Naive thymus-derived CD4-positive, alpha-beta T cell (primary cell): ENCODE measurements at regions of chr12 and their contacts with region 1.

Region 1: GRCh38 chr12:91811481-91812287 is 334.0 kb downstream of the BTG1 start:
- DNase-seq: peak; percentile 64 to 79 (median 70)
- ATAC-seq: peak; percentile 90
- H3K4me3 ChIP-seq: peak overlapping the region; percentile 37
- H3K4me3 Mint-ChIP-seq: peak overlapping the region in 9 of 10 donors; percentile 31 to 80 (median 52)
- H3K27ac ChIP-seq: peak overlapping the region; percentile 22
- H3K27ac Mint-ChIP-seq: peak overlapping the region in 8 of 9 donors; percentile 81 to 97 (median 86)
- H3K4me1 ChIP-seq: peaks cover 0 to 15% of the 10 kb centered on the region in 2 donors
- H3K4me1 Mint-ChIP-seq: peaks cover 10 to 48% (median 35%) of the 10 kb centered on the region in 7 donors
- H3K27me3 ChIP-seq: no peaks in the 10 kb centered on the region
- H3K27me3 Mint-ChIP-seq: no peaks in the 10 kb centered on the region

Region 2: DNA sequence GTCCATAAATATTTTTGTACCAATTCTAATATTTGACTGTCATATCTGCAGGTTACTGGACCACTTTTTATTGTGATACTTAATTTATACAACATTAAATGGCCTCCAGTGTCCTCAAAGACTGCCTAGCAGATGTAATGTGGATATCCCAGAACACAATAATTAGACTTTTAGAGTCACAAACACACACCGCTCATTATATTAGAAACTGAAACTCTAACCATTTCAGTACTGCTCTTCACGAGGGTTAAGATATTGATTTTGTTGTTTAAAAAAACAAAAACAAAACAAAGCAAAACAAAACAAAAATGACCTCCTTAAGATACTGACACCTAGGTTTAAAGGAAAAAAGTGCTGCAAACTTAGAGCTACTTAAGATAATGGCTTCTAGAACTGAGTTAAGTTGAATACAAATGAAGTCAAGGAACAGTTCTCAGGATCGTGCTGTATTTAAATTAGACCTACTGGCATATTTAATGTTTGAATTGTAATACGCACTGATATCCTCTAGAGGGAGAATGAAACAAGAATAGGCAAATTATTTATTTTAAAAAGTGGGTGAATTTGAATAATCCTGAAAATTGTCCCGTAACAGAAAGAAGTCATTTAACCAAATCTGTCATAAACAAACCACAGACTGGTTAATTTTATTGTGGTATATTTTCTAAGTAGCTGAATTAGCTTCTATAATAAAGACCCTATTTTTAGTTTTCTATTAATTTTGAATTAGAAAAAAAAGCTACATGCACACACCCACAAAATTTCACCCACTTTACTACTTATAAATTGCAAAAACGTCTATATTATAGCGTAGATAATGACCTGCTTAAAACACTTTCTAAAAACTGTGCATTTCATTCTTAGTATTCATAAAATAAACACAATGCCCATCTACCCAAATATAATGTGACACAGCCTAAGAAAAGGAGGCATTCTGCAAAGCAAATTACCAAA is 233.8 kb before region 1 on chr12:
- CTCF ChIA-PET with region 1: interaction called, 6 read pairs
- POLR2A ChIA-PET with region 1: no interaction called
- intact Hi-C with region 1: loop called in 1 of 2 experiments (anchors 2 kb)
- DNase-seq: peak in 6 of 9 donors; percentile 30 to 53 (median 39)
- ATAC-seq: peak; percentile 88
- H3K4me3 ChIP-seq: peak overlapping the region; percentile 39
- H3K4me3 Mint-ChIP-seq: peak overlapping the region; percentile 16 to 93 (median 84)
- H3K27ac ChIP-seq: no peak overlapping the region
- H3K27ac Mint-ChIP-seq: peak overlapping the region; percentile 14 to 94 (median 81)
- H3K4me1 ChIP-seq: peaks cover 0 to 5% of the 10 kb centered on the region in 2 donors
- H3K4me1 Mint-ChIP-seq: peaks cover 12 to 36% (median 19%) of the 10 kb centered on the region in 7 donors
- H3K27me3 ChIP-seq: no peaks in the 10 kb centered on the region
- H3K27me3 Mint-ChIP-seq: peaks cover 0 to 3% (median 0%) of the 10 kb centered on the region in 5 donors

Region 3: GRCh38 chr12:91778938-91779400 is 32.7 kb before region 1 on chr12:
- CTCF ChIA-PET with region 1: interaction called, 20 read pairs
- POLR2A ChIA-PET with region 1: interaction called, 10 read pairs
- intact Hi-C with region 1: loop called in 1 of 2 experiments (anchors 1 kb)
- DNase-seq: peak in 8 of 9 donors; percentile 14 to 47 (median 27)
- ATAC-seq: peak; percentile 75
- H3K4me3 ChIP-seq: peak overlapping the region; percentile 29
- H3K4me3 Mint-ChIP-seq: peak overlapping the region; percentile 72 to 92 (median 83)
- H3K27ac ChIP-seq: peak overlapping the region; percentile 67
- H3K27ac Mint-ChIP-seq: peak overlapping the region; percentile 91 to 97 (median 93)
- H3K4me1 ChIP-seq: peaks cover 10 to 35% of the 10 kb centered on the region in 2 donors
- H3K4me1 Mint-ChIP-seq: peaks cover 19 to 70% (median 50%) of the 10 kb centered on the region in 7 donors
- H3K27me3 ChIP-seq: no peaks in the 10 kb centered on the region
- H3K27me3 Mint-ChIP-seq: peaks cover 0 to 4% (median 3%) of the 10 kb centered on the region in 5 donors

Region 4: GRCh38 chr12:91785655-91786498 is 25.8 kb before region 1 on chr12:
- CTCF ChIA-PET with region 1: interaction called, 20 read pairs
- POLR2A ChIA-PET with region 1: interaction called, 9 read pairs
- intact Hi-C with region 1: loop called in 1 of 2 experiments (anchors 2 kb)
- DNase-seq: no peak
- ATAC-seq: no peak
- H3K4me3 ChIP-seq: no peak overlapping the region
- H3K4me3 Mint-ChIP-seq: peak overlapping the region in 8 of 10 donors; percentile 28 to 79 (median 70)
- H3K27ac ChIP-seq: peak overlapping the region; percentile 25
- H3K27ac Mint-ChIP-seq: peak overlapping the region in 7 of 9 donors; percentile 64 to 89 (median 75)
- H3K4me1 ChIP-seq: peaks cover 3 to 19% of the 10 kb centered on the region in 2 donors
- H3K4me1 Mint-ChIP-seq: peaks cover 6 to 47% (median 25%) of the 10 kb centered on the region in 7 donors
- H3K27me3 ChIP-seq: no peaks in the 10 kb centered on the region
- H3K27me3 Mint-ChIP-seq: peaks cover 0 to 4% (median 3%) of the 10 kb centered on the region in 5 donors

Region 5: DNA sequence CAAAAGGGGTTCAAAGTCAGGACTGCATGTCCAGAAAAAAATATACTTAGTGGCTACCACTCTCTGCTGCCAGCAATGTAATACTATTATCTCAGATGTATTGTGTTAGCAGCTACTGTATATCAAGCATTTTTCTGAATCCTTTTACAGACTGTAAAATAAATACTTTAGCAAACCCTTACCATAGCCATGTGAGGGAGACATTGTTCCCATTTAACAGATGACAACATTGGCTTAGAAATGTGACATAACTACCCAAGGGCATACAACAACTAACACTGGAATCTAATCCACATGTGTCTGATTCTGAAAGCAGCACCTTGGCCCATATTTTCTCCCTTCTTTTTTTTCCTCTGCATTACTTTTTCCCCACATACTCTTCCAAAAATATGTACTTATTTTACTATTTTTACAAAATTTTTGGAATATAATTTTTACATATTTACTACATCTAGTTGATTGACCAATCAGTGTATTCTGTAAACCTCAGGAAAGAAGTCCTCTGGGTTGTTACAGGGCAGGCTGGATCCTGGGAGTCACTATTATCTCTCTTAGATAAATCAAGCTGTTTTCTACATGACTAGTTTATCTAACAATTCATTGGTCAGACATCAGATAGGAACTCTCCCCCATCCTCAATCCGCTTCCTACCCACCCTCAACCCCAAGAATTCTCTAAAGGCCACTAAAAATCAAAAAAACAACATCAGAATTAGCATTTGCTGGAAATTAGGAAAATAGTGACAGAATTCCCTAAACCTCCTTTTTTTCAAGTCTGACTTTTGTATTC is 179.9 kb after region 1 on chr12:
- CTCF ChIA-PET with region 1: interaction called, 9 read pairs
- POLR2A ChIA-PET with region 1: interaction called, 4 read pairs
- intact Hi-C with region 1: loop called (anchors 1 to 5 kb)
- DNase-seq: peak in 5 of 9 donors; percentile 22 to 64 (median 48)
- ATAC-seq: peak; percentile 83
- H3K4me3 ChIP-seq: no peak overlapping the region
- H3K4me3 Mint-ChIP-seq: peak overlapping the region in 5 of 10 donors; percentile 18 to 50 (median 32)
- H3K27ac ChIP-seq: peak overlapping the region; percentile 26
- H3K27ac Mint-ChIP-seq: peak overlapping the region in 7 of 9 donors; percentile 8 to 92 (median 70)
- H3K4me1 ChIP-seq: peaks cover 9 to 27% of the 10 kb centered on the region in 2 donors
- H3K4me1 Mint-ChIP-seq: peaks cover 9 to 92% (median 79%) of the 10 kb centered on the region in 7 donors
- H3K27me3 ChIP-seq: no peaks in the 10 kb centered on the region
- H3K27me3 Mint-ChIP-seq: no peaks in the 10 kb centered on the region